HCT116 (cell line): ENCODE measurements at regions of chr1 and their contacts with region 1.

Region 1: GRCh38 chr1:36285448-36286101 is 20.6 kb upstream of the SH3D21 start:
- DNase-seq: peak; percentile 78
- ATAC-seq: peak; percentile 98
- H3K4me3 ChIP-seq: no peak overlapping the region
- H3K27ac ChIP-seq: peak overlapping the region; percentile 17; the same call in 1 of the 2 replicates
- H3K4me1 ChIP-seq: no peaks in the 10 kb centered on the region; a peak in 2 of 4 replicates
- H3K27me3 ChIP-seq: no peaks in the 10 kb centered on the region
- CTCF ChIP-seq: peak; percentile 68 to 84 (median 82); a peak in 5 of 6 replicates
- POLR2A ChIP-seq: no peak
- RAD21 ChIP-seq: peak; percentile 85

Region 2: DNA sequence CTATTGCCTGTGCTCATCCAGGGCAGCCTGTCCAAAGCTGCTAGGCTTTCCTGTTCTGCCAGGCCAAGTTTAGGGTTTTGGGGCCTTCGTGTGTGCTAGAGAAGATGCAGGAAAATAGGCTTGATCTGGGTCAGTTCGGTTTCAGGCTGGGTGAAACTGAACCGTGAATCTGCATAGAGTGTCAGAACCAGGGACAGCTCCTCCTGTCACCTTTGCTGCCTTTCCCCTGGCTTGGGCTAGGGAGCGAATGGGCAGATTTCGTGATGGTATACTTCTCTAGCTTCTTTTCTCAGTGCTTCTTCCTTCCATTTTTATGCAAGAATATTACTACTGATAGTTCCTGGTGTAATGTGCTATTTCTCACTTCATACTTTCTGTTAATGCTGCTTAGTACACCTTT is 408.6 kb before region 1 on chr1:
- CTCF ChIA-PET with region 1: no interaction called
- POLR2A ChIA-PET with region 1: no interaction called
- RAD21 ChIA-PET with region 1: no interaction called
- intact Hi-C with region 1: no loop called
- DNase-seq: no peak
- ATAC-seq: peak; percentile 53; the same call in 1 of the 2 replicates
- H3K4me3 ChIP-seq: no peak overlapping the region
- H3K27ac ChIP-seq: no peak overlapping the region
- H3K4me1 ChIP-seq: no peaks in the 10 kb centered on the region
- H3K27me3 ChIP-seq: no peaks in the 10 kb centered on the region
- CTCF ChIP-seq: no peak
- POLR2A ChIP-seq: no peak
- RAD21 ChIP-seq: no peak

Region 3: GRCh38 chr1:35988237-35988636 is 297.3 kb before region 1 on chr1:
- CTCF ChIA-PET with region 1: no interaction called
- POLR2A ChIA-PET with region 1: no interaction called
- RAD21 ChIA-PET with region 1: no interaction called
- intact Hi-C with region 1: no loop called
- DNase-seq: no peak
- ATAC-seq: no peak
- H3K4me3 ChIP-seq: no peak overlapping the region
- H3K27ac ChIP-seq: no peak overlapping the region
- H3K4me1 ChIP-seq: no peaks in the 10 kb centered on the region
- H3K27me3 ChIP-seq: no peaks in the 10 kb centered on the region
- CTCF ChIP-seq: no peak
- POLR2A ChIP-seq: no peak
- RAD21 ChIP-seq: no peak

Region 4: DNA sequence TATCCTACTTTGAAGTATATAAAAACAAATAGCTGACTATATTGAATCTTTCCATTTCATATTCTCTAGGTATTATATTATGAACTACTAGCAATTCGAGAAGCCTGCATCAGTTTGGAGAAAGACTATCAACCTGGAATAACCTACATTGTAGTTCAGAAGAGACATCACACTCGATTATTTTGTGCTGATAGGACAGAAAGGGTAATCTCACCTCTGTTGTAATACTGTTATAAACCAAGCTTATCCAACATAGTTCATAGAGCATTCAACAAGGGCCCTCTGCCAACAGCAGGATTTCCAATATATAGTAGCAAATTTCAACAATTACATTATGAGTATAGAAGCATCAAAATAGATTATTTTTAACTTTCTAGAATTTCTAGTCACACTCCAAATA is 245.3 kb before region 1 on chr1:
- CTCF ChIA-PET with region 1: no interaction called
- POLR2A ChIA-PET with region 1: no interaction called
- RAD21 ChIA-PET with region 1: no interaction called
- intact Hi-C with region 1: no loop called
- DNase-seq: no peak
- ATAC-seq: no peak
- H3K4me3 ChIP-seq: no peak overlapping the region
- H3K27ac ChIP-seq: no peak overlapping the region
- H3K4me1 ChIP-seq: no peaks in the 10 kb centered on the region
- H3K27me3 ChIP-seq: no peaks in the 10 kb centered on the region
- CTCF ChIP-seq: no peak
- POLR2A ChIP-seq: no peak
- RAD21 ChIP-seq: no peak

Region 5: GRCh38 chr1:36187800-36188593 is 97.6 kb before region 1 on chr1:
- CTCF ChIA-PET with region 1: interaction called, 5 read pairs
- POLR2A ChIA-PET with region 1: no interaction called
- RAD21 ChIA-PET with region 1: no interaction called
- intact Hi-C with region 1: loop called (anchors 1 kb)
- DNase-seq: peak; percentile 79
- ATAC-seq: peak; percentile 96
- H3K4me3 ChIP-seq: no peak overlapping the region
- H3K27ac ChIP-seq: peak overlapping the region; percentile 20; the same call in 1 of the 2 replicates
- H3K4me1 ChIP-seq: peaks cover 4 to 13% of the 10 kb centered on the region in 2 experiments; a peak in 3 of 4 replicates
- H3K27me3 ChIP-seq: no peaks in the 10 kb centered on the region
- CTCF ChIP-seq: peak; percentile 90 to 94 (median 92)
- POLR2A ChIP-seq: no peak
- RAD21 ChIP-seq: peak; percentile 99

Region 6: GRCh38 chr1:36300526-36300925 is 15.0 kb after region 1 on chr1:
- CTCF ChIA-PET with region 1: interaction called, 17 read pairs
- POLR2A ChIA-PET with region 1: no interaction called
- RAD21 ChIA-PET with region 1: no interaction called
- intact Hi-C with region 1: no loop called
- DNase-seq: no peak
- ATAC-seq: no peak
- H3K4me3 ChIP-seq: no peak overlapping the region
- H3K27ac ChIP-seq: peak overlapping the region; percentile 47; the same call in 1 of the 2 replicates
- H3K4me1 ChIP-seq: peaks cover 11 to 33% of the 10 kb centered on the region in 2 experiments
- H3K27me3 ChIP-seq: no peaks in the 10 kb centered on the region
- CTCF ChIP-seq: no peak
- POLR2A ChIP-seq: no peak
- RAD21 ChIP-seq: no peak